ENCODE measurements at regions of chr7 and their contacts with region 1.

Region 1: GRCh38 chr7:82821037-82821436 is 341.6 kb downstream of the PCLO start:
- H3K4me3 ChIP-seq: no peak overlapping the region
- H3K27ac ChIP-seq: no peak overlapping the region
- H3K4me1 ChIP-seq: no peaks in the 10 kb centered on the region
- CTCF ChIP-seq: no peak

Region 2: GRCh38 chr7:82810558-82811259 is 10.3 kb before region 1 on chr7:
- CTCF ChIA-PET with region 1: interaction called, 17 read pairs
- POLR2A ChIA-PET with region 1: no interaction called
- H3K4me3 ChIP-seq: no peak overlapping the region
- H3K27ac ChIP-seq: no peak overlapping the region
- H3K4me1 ChIP-seq: no peaks in the 10 kb centered on the region
- CTCF ChIP-seq: peak; percentile 28; the same call in 1 of the 2 replicates